Transverse colon (tissue), 4 donors: ENCODE measurements at regions of chr2 and their contacts with region 1.

Region 1: GRCh38 chr2:62705007-62705829 is at the start of gene EHBP1:
- DNase-seq: peak; percentile 99
- H3K4me3 ChIP-seq: peak within 1 kb of the TSS; percentile 75 to 92 (median 86)
- H3K27ac ChIP-seq: peak within 1 kb of the TSS; percentile 92 to 97 (median 93)
- H3K4me1 ChIP-seq: peaks cover 4 to 36% (median 25%) of the 10 kb centered on the region in 4 donors
- H3K27me3 ChIP-seq: no peaks in the 10 kb centered on the region
- CTCF ChIP-seq: no peak
- EP300 ChIP-seq: no peak
- POLR2A ChIP-seq: peak; percentile 86
- total RNA-seq, gene EHBP1: 41.1 to 69.4 (median 47.0) TPM

Region 2: DNA sequence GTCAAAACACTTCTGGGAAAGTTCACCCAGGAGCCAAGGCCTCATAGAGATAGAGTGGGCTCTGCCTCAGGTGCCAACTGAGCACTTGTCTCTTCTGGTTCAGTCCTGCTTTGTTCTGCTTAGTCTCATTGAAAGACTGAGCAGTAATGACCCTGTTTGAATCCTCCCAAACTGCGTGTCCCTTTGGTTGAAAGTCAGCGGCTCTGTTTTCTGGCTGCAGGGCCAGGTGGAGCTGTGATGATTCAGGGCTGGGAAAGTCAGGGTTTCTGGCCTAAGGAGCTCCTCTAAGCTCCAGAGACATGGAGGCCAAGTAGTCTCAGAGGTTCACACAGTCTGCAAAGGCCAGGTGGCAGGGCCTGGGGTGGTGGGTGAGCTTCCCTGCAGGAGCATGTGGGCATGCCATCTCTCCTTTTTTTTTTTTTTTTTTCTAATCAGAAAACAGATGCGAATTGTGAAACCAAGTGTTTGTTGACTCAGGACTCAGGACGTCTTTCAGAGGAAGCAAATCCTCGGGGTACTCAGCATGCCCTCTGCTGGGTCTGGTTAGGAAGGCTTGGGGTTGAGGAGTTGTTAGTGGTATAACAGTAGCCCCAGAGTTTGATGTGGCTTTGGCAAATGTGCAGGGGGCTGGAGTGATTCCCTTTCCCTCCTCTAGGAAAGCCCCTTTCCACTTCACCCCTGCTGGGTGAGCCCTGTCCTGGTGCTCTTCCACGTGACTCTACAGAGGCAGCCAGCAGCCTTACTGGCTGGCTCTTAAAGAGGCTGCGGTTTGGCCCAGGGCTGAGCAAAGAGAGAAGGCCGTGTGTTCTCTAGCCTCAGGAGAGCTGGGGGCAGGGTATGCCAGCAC is 237.5 kb before region 1 on chr2:
- in situ Hi-C with region 1: no loop called
- intact Hi-C with region 1: loop called (anchors 10 kb)
- DNase-seq: no peak
- H3K4me3 ChIP-seq: no peak overlapping the region
- H3K27ac ChIP-seq: no peak overlapping the region
- H3K4me1 ChIP-seq: peaks cover 0 to 3% (median 0%) of the 10 kb centered on the region in 4 donors
- H3K27me3 ChIP-seq: no peaks in the 10 kb centered on the region
- CTCF ChIP-seq: no peak
- EP300 ChIP-seq: no peak
- POLR2A ChIP-seq: no peak